ENCODE measurements at regions of chr17 and their contacts with region 1.

Region 1: DNA sequence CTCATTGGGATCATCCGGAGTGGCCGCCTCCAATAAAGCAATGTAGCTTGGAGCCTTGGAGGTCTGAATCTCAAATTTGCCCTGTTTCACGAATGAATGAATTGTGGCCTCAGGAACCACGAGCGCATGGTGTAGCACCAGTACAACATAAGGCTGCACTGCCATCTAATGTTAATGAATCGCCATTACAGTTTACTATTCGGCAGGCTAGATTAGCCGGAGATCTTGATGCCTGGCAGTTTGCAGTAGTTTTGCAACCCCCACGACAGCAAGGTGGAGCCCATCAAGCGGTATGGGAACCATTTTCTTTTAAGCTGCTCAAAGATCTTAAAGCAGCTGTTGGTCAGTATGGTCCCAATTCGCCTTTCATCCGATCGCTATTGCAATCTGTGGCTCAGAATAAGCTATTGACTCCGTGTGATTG is 18.8 kb downstream of the ALOX15B start:
- DNase-seq: peak; percentile 51
- H3K4me3 ChIP-seq: no peak overlapping the region
- H3K27ac ChIP-seq: no peak overlapping the region
- H3K27me3 ChIP-seq: peaks cover 40% of the 10 kb centered on the region
- CTCF ChIP-seq: peak; percentile 76

Region 2: DNA sequence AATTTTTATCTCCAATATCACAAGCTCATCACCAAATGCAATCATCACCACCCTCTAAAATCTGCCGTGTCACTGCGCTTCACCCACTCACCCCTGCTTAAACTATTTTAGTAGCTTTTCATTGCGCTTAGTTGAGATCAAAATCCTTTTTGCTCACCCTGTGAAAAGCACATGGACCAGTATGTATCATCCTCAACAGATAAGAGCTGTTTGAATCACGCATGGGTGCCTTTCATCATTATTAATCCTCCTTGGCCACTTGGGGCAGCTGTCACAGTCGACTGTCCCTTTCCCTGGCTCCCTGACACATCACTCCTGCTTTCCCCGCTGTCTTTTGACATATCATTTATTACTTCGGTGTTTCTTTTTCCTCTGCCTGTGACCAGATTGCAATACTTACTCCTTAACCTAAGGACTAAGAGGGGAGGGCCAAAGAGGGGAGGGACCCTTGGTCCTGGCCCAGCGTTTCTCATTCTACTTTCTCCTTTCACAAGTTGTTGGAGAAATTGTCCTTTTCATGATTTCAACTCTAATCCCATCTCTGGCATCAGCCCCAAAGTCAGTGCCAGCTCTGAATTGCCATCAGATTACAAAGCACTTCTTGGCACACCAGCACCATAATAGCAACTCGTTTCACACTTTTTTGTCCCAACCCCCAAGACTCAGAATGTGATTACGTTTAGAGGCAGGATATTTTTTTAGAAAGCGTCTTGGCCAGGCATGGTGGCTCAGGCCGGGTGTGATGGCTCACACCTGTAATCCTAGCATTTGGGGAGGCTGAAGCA is 232.3 kb before region 1 on chr17:
- CTCF ChIA-PET with region 1: interaction called, 10 read pairs
- POLR2A ChIA-PET with region 1: no interaction called
- DNase-seq: no peak
- H3K4me3 ChIP-seq: no peak overlapping the region
- H3K27ac ChIP-seq: no peak overlapping the region
- H3K27me3 ChIP-seq: peaks cover 9% of the 10 kb centered on the region
- CTCF ChIP-seq: no peak

Region 3: DNA sequence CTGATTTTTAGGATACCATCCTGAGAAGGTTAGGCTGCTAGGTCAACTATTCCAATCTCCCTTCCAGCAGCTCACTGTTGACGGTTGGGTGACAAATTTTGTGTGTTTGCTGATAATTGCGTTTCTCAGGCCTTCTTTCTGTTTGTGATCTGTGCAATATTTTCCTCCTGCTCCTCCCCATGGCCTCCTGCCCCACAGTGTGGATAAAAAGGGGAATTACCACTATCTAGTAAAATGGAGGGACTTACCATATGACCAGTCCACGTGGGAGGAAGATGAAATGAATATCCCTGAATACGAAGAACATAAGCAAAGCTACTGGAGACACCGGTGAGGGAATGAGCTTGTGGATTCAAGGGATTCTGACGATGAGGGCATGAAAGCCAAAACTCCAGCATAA is 159.9 kb before region 1 on chr17:
- CTCF ChIA-PET with region 1: interaction called, 20 read pairs
- POLR2A ChIA-PET with region 1: no interaction called
- DNase-seq: no peak
- H3K4me3 ChIP-seq: no peak overlapping the region
- H3K27ac ChIP-seq: no peak overlapping the region
- H3K27me3 ChIP-seq: no peaks in the 10 kb centered on the region
- CTCF ChIP-seq: peak; percentile 70

Region 4: DNA sequence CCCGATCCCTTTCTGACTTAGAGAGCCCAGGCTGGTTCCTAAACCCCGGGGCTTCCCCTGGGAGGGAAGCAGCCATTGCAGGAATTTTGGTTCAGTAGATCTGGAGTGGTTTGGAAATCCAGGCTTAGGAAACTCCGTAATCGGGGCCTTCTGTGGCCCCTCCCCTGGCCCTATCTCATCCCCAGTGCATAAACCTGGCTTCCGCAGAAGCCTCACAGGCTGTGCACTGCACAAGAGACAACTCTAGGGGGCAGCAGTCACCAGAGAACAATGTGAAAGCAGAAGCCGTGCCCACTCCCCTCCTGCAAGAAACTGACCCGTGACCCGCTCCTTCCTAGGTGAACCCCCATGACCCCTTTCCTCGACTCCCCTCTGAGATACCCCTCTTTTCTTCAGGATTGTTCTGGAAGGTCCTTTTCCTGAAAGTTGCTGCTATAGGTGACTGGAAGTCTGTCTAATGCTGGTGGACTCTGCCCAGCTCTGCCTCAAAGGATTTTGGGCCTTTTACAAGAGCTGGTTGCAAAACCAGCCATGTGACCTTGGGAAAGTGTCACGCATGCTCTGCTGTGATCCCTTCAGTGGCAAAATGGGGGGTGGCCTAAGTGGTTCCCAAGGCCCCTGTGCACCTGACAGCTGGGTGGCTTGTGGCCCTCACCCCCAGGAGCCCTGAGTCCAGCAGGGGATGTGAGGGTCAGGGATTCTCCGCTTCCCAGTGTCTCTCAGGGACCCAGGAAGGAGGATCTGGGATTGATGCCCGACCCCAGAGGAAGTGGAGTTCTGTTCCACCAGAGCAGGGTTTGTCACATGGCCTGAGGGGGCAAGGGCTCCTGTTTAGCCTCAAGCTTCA is 40.8 kb before region 1 on chr17:
- CTCF ChIA-PET with region 1: interaction called, 12 read pairs
- POLR2A ChIA-PET with region 1: no interaction called
- DNase-seq: no peak
- H3K4me3 ChIP-seq: no peak overlapping the region
- H3K27ac ChIP-seq: no peak overlapping the region
- H3K27me3 ChIP-seq: peaks cover 50% of the 10 kb centered on the region
- CTCF ChIP-seq: peak; percentile 49

Region 5: GRCh38 chr17:8091033-8091687 is 33.5 kb after region 1 on chr17:
- CTCF ChIA-PET with region 1: interaction called, 40 read pairs
- POLR2A ChIA-PET with region 1: no interaction called
- DNase-seq: no peak
- H3K4me3 ChIP-seq: no peak overlapping the region
- H3K27ac ChIP-seq: no peak overlapping the region
- H3K27me3 ChIP-seq: peaks cover 31% of the 10 kb centered on the region
- CTCF ChIP-seq: no peak

Region 6: GRCh38 chr17:8156246-8156992 is 98.7 kb after region 1 on chr17:
- CTCF ChIA-PET with region 1: interaction called, 16 read pairs
- POLR2A ChIA-PET with region 1: no interaction called
- DNase-seq: peak; percentile 100
- H3K4me3 ChIP-seq: peak overlapping the region; percentile 72
- H3K27ac ChIP-seq: peak overlapping the region; percentile 97
- H3K27me3 ChIP-seq: no peaks in the 10 kb centered on the region
- CTCF ChIP-seq: no peak